AG04450 (cell line): ENCODE measurements at regions of chr3 and their contacts with region 1.

Region 1: DNA sequence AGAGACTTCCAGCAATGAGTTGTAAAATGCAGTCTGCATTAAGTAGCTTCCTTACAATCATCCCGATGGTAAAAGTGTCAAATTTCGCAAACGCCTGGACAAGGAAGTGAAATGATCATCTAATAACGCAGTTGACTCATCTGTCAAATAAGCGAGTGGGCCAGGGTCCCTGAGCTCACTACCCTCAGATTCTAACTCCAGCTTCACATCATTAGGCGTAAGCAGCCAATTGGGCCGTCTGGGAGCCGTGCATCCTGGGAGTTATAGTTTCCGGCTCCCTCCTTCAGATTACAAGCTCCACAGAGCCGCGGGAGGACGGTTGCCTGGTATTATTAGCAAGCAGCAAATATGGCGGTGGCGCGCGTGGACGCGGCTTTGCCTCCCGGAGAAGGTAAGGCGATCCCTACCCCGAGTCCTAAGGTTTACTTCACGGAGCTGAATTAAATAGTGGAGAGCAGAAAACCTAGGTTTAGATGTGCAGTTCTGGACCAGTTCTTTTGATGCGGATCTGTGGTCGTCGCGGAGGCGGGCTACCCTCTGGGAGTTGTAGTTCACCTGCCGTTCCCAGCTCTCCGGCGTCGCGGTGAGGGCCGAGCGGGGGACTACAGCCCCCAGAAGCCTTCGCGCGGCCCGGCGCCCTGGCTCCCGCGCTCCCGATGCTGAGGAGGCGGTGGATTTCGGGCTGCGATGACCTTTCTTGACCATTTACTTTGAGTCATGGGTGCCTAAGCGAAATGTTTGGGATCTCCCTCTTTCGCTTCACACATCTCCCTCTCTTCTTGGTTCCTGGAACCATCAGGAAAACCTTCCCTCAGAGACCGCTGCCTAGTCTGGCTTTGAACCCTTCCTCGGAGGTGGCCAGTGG is at the start of gene CEP97:
- DNase-seq: peak; percentile 68
- H3K4me3 ChIP-seq: peak within 1 kb of the TSS; percentile 92
- H3K27ac ChIP-seq: peak within 1 kb of the TSS; percentile 23
- H3K27me3 ChIP-seq: no peaks in the 10 kb centered on the region
- CTCF ChIP-seq: no peak
- polyA plus RNA-seq, gene CEP97: 2.4 TPM in 2 replicates

Region 2: GRCh38 chr3:101709126-101709525 is 15.4 kb before region 1 on chr3:
- CTCF ChIA-PET with region 1: interaction called, 26 read pairs
- POLR2A ChIA-PET with region 1: interaction called, 6 read pairs
- DNase-seq: no peak
- H3K4me3 ChIP-seq: no peak overlapping the region
- H3K27ac ChIP-seq: no peak overlapping the region
- H3K27me3 ChIP-seq: no peaks in the 10 kb centered on the region
- CTCF ChIP-seq: no peak

Region 3: DNA sequence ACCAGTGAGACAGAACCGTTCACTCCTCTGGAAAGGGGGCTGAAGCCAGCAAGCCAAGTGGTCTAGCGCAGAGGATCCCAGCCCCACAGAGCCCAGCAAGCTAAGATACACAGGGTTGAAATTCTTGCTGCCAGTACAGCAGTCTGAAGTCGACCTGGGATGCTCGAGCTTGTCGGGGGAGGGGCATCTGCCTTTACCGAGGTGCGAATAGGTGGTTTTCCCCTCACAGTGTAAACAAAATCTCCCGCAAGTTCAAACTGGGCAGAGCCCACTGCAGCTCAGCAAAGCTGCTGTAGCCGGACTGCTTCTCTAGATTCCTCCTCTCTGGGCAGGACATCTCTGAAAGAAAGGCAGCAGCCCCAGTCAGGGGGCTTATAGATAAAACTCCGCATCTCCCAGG is 11.3 kb after region 1 on chr3:
- CTCF ChIA-PET with region 1: no interaction called
- POLR2A ChIA-PET with region 1: no interaction called
- DNase-seq: no peak
- H3K4me3 ChIP-seq: no peak overlapping the region
- H3K27ac ChIP-seq: no peak overlapping the region
- H3K27me3 ChIP-seq: no peaks in the 10 kb centered on the region
- CTCF ChIP-seq: no peak

Region 4: GRCh38 chr3:102006812-102007485 is 282.4 kb after region 1 on chr3:
- CTCF ChIA-PET with region 1: no interaction called
- POLR2A ChIA-PET with region 1: no interaction called
- DNase-seq: peak; percentile 81
- H3K4me3 ChIP-seq: no peak overlapping the region
- H3K27ac ChIP-seq: no peak overlapping the region
- H3K27me3 ChIP-seq: no peaks in the 10 kb centered on the region
- CTCF ChIP-seq: no peak

Region 5: GRCh38 chr3:102018551-102018950 is 294.0 kb after region 1 on chr3:
- CTCF ChIA-PET with region 1: no interaction called
- POLR2A ChIA-PET with region 1: no interaction called
- DNase-seq: no peak
- H3K4me3 ChIP-seq: no peak overlapping the region
- H3K27ac ChIP-seq: no peak overlapping the region
- H3K27me3 ChIP-seq: no peaks in the 10 kb centered on the region
- CTCF ChIP-seq: no peak

Region 6: GRCh38 chr3:102181175-102181920 is 456.8 kb after region 1 on chr3:
- CTCF ChIA-PET with region 1: no interaction called
- POLR2A ChIA-PET with region 1: no interaction called
- DNase-seq: peak; percentile 59
- H3K4me3 ChIP-seq: no peak overlapping the region
- H3K27ac ChIP-seq: peak overlapping the region; percentile 63
- H3K27me3 ChIP-seq: no peaks in the 10 kb centered on the region
- CTCF ChIP-seq: no peak